HEK293T (cell line): ENCODE measurements at regions of chr2 and their contacts with region 1.

Region 1: DNA sequence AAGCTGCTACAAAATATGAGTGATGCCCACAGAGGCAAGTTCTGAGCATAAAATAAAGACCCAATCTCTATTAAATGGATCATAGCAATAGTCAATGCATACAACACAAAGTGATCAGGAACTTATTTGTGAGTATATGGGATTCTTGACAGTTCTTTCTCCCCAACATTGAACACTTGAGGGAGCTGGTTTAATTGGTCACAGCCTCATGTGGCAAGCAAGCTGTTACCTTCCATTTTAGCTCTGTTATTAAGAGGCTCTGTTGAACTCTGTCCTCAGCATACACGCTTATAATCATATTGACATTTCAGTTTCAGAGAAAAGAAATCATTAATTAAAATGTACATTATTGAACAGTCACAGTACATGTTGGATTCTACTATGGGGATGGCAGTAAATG is 37.6 kb upstream of the PAX3 start:
- DNase-seq: no peak

Region 2: DNA sequence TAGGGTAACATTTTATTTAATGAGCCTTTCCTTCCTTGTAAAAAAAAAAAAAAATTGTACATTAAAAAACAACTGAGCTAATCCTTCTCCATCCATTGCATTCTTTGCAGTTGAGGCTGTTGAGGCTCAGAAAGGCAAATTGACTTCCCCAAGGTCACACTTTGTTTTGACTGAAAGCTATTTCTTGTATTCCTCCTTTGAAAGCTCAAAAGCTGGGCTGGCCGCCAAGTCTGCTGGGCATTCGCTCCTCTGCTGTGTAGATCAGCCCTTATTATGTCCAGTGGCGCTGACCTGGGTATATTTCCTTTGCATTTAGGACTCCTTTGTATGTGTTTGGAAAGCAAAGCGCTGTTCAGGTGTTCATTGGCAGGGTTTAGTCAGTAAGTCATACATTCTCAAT is 131.9 kb after region 1 on chr2:
- CTCF ChIA-PET with region 1: interaction called, 10 read pairs
- POLR2A ChIA-PET with region 1: no interaction called
- DNase-seq: no peak